MCF 10A (cell line): ENCODE measurements at regions of chr6 and their contacts with region 1.

Region 1: GRCh38 chr6:127855542-127856159 is 45.2 kb downstream of the THEMIS start:
- DNase-seq: peak; percentile 35
- H3K4me3 Mint-ChIP-seq: no peak overlapping the region
- H3K27ac Mint-ChIP-seq: no peak overlapping the region
- H3K4me1 Mint-ChIP-seq: no peaks in the 10 kb centered on the region
- H3K27me3 Mint-ChIP-seq: no peaks in the 10 kb centered on the region
- CTCF ChIP-seq: peak; percentile 40

Region 2: GRCh38 chr6:127737009-127737486 is 118.6 kb before region 1 on chr6:
- CTCF ChIA-PET with region 1: interaction called, 8 read pairs
- POLR2A ChIA-PET with region 1: no interaction called
- intact Hi-C with region 1: loop called (anchors 5 kb)
- DNase-seq: peak; percentile 77
- H3K4me3 Mint-ChIP-seq: no peak overlapping the region
- H3K27ac Mint-ChIP-seq: no peak overlapping the region
- H3K4me1 Mint-ChIP-seq: no peaks in the 10 kb centered on the region
- H3K27me3 Mint-ChIP-seq: peaks cover 14% of the 10 kb centered on the region
- CTCF ChIP-seq: peak; percentile 70

Region 3: DNA sequence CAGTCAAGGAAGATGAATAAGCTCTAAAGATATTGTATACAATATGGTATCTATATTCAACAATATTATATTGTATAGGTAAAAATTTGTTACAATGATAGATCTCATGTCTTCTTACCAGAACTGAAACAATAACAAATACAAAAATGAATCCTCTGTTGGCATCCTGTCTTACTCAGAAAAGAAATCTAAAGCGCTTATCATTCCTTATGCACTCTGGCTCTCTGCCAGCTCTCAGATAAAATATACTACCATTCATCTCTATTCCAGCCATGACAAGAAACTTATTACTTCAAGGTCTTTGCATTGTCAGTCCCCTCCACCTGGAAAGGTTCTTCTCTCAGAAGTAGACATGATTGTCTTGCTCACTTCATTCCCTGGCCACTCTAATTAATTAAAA is 93.4 kb before region 1 on chr6:
- CTCF ChIA-PET with region 1: no interaction called
- POLR2A ChIA-PET with region 1: no interaction called
- intact Hi-C with region 1: no loop called
- DNase-seq: no peak
- H3K4me3 Mint-ChIP-seq: no peak overlapping the region
- H3K27ac Mint-ChIP-seq: no peak overlapping the region
- H3K4me1 Mint-ChIP-seq: no peaks in the 10 kb centered on the region
- H3K27me3 Mint-ChIP-seq: no peaks in the 10 kb centered on the region
- CTCF ChIP-seq: no peak

Region 4: GRCh38 chr6:127845242-127845641 is 10.4 kb before region 1 on chr6:
- CTCF ChIA-PET with region 1: interaction called, 11 read pairs
- POLR2A ChIA-PET with region 1: no interaction called
- intact Hi-C with region 1: no loop called
- DNase-seq: no peak
- H3K4me3 Mint-ChIP-seq: no peak overlapping the region
- H3K27ac Mint-ChIP-seq: no peak overlapping the region
- H3K4me1 Mint-ChIP-seq: no peaks in the 10 kb centered on the region
- H3K27me3 Mint-ChIP-seq: peaks cover 31% of the 10 kb centered on the region
- CTCF ChIP-seq: no peak

Region 5: DNA sequence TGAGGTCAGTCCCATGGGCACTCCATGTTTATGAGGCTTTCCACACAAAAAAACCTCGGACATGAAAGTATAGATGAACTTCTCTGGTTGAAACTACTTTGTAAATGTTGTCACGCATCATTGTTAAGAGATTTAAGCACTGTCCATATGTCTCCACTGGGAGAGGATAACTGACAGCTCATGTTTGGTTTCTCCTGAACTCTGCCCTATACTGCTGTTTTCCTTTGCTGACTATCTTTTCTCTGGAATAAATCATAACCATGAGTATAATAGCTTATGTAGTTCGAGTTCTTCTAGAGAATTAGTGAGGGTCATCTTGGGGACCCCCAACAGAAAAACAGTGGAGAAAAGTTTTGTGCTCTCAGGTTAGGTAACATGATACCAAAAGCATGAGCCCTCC is 31.0 kb after region 1 on chr6:
- CTCF ChIA-PET with region 1: no interaction called
- POLR2A ChIA-PET with region 1: no interaction called
- intact Hi-C with region 1: no loop called
- DNase-seq: no peak
- H3K4me3 Mint-ChIP-seq: no peak overlapping the region
- H3K27ac Mint-ChIP-seq: no peak overlapping the region
- H3K4me1 Mint-ChIP-seq: no peaks in the 10 kb centered on the region
- H3K27me3 Mint-ChIP-seq: no peaks in the 10 kb centered on the region
- CTCF ChIP-seq: no peak

Region 6: GRCh38 chr6:128078276-128078675 is 222.6 kb after region 1 on chr6:
- CTCF ChIA-PET with region 1: no interaction called
- POLR2A ChIA-PET with region 1: no interaction called
- intact Hi-C with region 1: no loop called
- DNase-seq: no peak
- H3K4me3 Mint-ChIP-seq: no peak overlapping the region
- H3K27ac Mint-ChIP-seq: no peak overlapping the region
- H3K4me1 Mint-ChIP-seq: no peaks in the 10 kb centered on the region
- H3K27me3 Mint-ChIP-seq: no peaks in the 10 kb centered on the region
- CTCF ChIP-seq: no peak

Region 7: GRCh38 chr6:128327890-128328289 is 472.2 kb after region 1 on chr6:
- CTCF ChIA-PET with region 1: no interaction called
- POLR2A ChIA-PET with region 1: no interaction called
- intact Hi-C with region 1: loop called (anchors 10 kb)
- DNase-seq: peak; percentile 38
- H3K4me3 Mint-ChIP-seq: no peak overlapping the region
- H3K27ac Mint-ChIP-seq: no peak overlapping the region
- H3K4me1 Mint-ChIP-seq: no peaks in the 10 kb centered on the region
- H3K27me3 Mint-ChIP-seq: no peaks in the 10 kb centered on the region
- CTCF ChIP-seq: peak; percentile 24

Region 8: GRCh38 chr6:128508588-128509296 is 653.1 kb after region 1 on chr6:
- CTCF ChIA-PET with region 1: interaction called, 14 read pairs
- POLR2A ChIA-PET with region 1: interaction called, 3 read pairs
- intact Hi-C with region 1: no loop called
- DNase-seq: peak; percentile 95
- H3K4me3 Mint-ChIP-seq: peak overlapping the region; percentile 68
- H3K27ac Mint-ChIP-seq: peak overlapping the region; percentile 85
- H3K4me1 Mint-ChIP-seq: peaks cover 49% of the 10 kb centered on the region
- H3K27me3 Mint-ChIP-seq: no peaks in the 10 kb centered on the region
- CTCF ChIP-seq: no peak

Region 9: DNA sequence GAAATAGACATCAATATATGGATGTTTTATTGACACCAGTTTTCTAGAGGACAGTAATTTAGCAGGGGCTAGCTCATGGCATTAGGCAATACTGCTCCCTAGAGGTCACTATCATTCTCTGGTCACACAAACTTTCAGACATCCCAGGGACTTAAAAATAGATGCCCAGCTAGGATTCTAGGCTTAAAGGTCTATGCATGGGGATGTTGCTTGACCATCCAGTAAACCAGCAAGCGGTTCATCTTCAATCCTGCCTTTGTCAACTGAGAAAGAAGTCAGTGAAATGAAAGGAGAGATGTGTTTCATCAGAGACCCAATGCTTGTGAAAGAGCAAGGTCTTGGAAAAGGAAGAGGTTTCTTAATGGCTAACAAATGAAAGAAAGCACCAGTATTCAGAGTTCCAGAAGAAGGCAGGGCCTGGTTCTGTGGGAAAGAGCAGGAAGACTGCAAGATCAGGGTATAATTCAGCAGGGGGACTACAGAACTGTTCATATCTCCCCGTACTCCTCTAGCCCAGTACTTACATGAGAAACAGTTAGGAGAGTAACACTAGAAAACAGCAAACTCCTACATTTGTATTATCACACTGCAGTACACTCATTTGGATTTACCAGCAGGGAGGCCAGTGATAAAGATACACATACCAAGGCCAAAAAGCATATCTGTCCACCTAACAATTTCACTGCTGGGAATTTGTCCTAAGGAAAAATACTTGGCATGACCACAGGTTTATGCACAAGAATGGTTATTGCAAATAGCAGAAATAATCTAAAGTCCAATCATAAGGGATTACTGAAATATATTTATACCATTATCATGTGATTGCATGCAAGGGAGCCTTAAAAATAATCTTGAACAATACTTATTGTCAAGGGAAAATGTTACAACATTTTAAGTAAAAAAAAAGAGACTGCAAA is 875.9 kb after region 1 on chr6:
- CTCF ChIA-PET with region 1: interaction called, 11 read pairs
- POLR2A ChIA-PET with region 1: no interaction called
- intact Hi-C with region 1: loop called (anchors 1 kb)
- DNase-seq: peak; percentile 64
- H3K4me3 Mint-ChIP-seq: no peak overlapping the region
- H3K27ac Mint-ChIP-seq: no peak overlapping the region
- H3K4me1 Mint-ChIP-seq: no peaks in the 10 kb centered on the region
- H3K27me3 Mint-ChIP-seq: no peaks in the 10 kb centered on the region
- CTCF ChIP-seq: peak; percentile 72

Region 10: GRCh38 chr6:129370268-129370916 is 1514.7 kb after region 1 on chr6:
- CTCF ChIA-PET with region 1: no interaction called
- POLR2A ChIA-PET with region 1: no interaction called
- intact Hi-C with region 1: loop called (anchors 10 kb)
- DNase-seq: peak; percentile 66
- H3K4me3 Mint-ChIP-seq: no peak overlapping the region
- H3K27ac Mint-ChIP-seq: no peak overlapping the region
- H3K4me1 Mint-ChIP-seq: no peaks in the 10 kb centered on the region
- H3K27me3 Mint-ChIP-seq: no peaks in the 10 kb centered on the region
- CTCF ChIP-seq: peak; percentile 75